Mammary epithelial cell (primary cell): ENCODE measurements at regions of chr7 and their contacts with region 1.

Region 1: DNA sequence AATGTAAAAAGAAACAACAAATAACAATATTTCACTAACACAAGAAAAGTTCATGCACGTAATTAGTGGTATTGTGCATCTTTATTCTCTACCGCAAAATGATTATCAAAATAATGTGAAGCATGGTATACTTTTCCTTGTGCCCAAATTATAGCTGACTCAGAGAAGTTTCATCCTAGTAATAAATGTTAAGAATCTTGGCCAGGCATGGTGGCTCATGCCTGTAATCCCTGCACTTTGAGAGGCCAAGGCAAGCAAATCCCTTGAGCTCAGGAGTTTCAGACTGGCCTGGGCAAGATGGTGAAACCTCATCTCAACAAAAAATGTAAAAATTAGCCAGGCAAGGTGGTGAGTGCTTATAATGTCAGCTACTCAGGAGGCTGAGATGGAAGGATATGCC is 105.0 kb downstream of the KMT2C start:
- DNase-seq: no peak
- H3K4me3 ChIP-seq: no peak overlapping the region
- H3K27ac ChIP-seq: no peak overlapping the region
- H3K4me1 ChIP-seq: no peaks in the 10 kb centered on the region
- H3K27me3 ChIP-seq: no peaks in the 10 kb centered on the region
- CTCF ChIP-seq: no peak

Region 2: DNA sequence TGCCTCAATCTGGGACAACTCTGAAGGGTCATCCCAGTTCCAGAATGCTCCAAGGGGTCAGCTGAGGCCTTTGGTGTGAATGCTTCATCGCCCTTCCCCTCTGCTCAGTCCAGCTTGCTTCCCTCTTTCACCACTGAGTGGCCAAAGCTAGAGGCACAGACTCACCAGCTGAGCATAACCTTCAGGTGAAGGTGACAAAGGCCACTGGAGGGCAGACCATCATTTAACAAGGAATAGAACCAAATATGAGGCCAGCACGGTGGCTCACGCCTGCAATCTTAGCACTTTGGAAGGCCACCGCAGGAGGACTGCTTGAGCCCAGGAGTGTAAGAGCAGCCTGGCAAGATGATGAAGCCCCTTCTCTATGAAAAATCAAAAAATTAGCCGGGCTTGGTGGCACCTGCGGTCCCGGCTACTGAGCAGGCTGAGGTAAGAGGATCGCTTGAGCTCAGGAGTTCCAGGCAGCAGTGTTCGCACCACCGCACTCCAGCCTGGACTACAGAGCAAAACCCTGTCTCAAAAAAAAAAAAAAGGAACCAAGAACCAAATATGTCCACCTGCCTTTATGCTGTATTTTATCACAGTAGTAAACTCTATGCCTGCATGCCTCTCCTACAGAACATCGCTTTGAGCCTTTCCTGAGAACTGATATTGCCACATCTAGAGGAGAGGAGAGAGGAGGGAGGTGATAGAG is 467.3 kb before region 1 on chr7:
- CTCF ChIA-PET with region 1: no interaction called
- dilution Hi-C with region 1: no loop called
- in situ Hi-C with region 1: no loop called
- intact Hi-C with region 1: no loop called
- DNase-seq: no peak
- H3K4me3 ChIP-seq: no peak overlapping the region
- H3K27ac ChIP-seq: no peak overlapping the region
- H3K4me1 ChIP-seq: no peaks in the 10 kb centered on the region
- H3K27me3 ChIP-seq: peaks cover 2% of the 10 kb centered on the region
- CTCF ChIP-seq: peak; percentile 2 to 12

Region 3: GRCh38 chr7:152366662-152367061 is 35.8 kb after region 1 on chr7:
- CTCF ChIA-PET with region 1: no interaction called
- dilution Hi-C with region 1: loop called (anchors 5 kb)
- in situ Hi-C with region 1: no loop called
- intact Hi-C with region 1: no loop called
- DNase-seq: no peak
- H3K4me3 ChIP-seq: no peak overlapping the region
- H3K27ac ChIP-seq: no peak overlapping the region
- H3K4me1 ChIP-seq: no peaks in the 10 kb centered on the region
- H3K27me3 ChIP-seq: no peaks in the 10 kb centered on the region
- CTCF ChIP-seq: no peak